ENCODE measurements at regions of chr2 and their contacts with region 1.

Region 1: GRCh38 chr2:70132244-70133126 is 45.2 kb downstream of the PCBP1 start:
- DNase-seq: peak; percentile 38

Region 2: DNA sequence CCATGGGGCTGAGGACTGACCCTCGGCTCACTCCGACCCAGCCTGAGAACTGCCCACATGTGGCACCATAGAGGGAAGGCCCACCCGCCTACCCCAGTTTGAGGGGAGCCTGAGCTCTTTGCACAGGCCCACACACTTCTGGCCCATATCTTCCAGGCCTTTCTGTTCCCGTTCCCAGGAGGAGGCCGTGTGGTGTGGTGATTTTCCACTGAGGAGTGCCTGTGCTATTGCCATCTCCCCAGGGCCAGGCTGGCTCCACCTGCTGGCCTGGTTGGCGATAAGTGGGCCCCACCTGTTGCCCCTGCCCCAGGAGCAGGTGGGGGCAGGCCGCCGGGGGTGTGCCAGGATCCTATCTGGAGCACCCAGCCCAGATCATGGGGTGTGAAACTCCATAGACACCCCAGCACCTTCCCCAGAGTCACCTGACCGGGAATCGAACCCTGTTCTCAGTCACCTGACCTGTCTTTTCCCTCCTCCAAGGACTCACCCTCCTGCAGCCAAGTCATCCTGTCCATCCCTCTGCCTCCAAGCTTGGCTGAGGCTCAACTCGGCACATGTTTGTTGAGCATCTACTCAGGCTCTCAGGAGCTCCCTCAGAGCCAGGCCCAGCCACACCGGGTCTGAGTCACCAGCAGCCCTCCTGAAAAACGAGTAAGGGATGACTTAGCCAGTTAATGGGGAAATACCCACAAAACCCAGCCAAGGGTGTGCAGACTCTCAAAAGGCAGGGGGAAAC is 1895.1 kb after region 1 on chr2:
- intact Hi-C with region 1: loop called in 1 of 2 experiments (anchors 10 kb)
- DNase-seq: peak; percentile 62

Measured in posterior vena cava (tissue), 2 donors.